ENCODE measurements at regions of chr3 and their contacts with region 1.

Region 1: GRCh38 chr3:26799679-26800317 is 177.2 kb downstream of the LRRC3B start:
- DNase-seq: no peak
- ATAC-seq: no peak
- H3K4me3 ChIP-seq: no peak overlapping the region
- H3K27ac ChIP-seq: no peak overlapping the region
- H3K4me1 ChIP-seq: no peaks in the 10 kb centered on the region
- H3K27me3 ChIP-seq: no peaks in the 10 kb centered on the region
- CTCF ChIP-seq: no peak

Region 2: DNA sequence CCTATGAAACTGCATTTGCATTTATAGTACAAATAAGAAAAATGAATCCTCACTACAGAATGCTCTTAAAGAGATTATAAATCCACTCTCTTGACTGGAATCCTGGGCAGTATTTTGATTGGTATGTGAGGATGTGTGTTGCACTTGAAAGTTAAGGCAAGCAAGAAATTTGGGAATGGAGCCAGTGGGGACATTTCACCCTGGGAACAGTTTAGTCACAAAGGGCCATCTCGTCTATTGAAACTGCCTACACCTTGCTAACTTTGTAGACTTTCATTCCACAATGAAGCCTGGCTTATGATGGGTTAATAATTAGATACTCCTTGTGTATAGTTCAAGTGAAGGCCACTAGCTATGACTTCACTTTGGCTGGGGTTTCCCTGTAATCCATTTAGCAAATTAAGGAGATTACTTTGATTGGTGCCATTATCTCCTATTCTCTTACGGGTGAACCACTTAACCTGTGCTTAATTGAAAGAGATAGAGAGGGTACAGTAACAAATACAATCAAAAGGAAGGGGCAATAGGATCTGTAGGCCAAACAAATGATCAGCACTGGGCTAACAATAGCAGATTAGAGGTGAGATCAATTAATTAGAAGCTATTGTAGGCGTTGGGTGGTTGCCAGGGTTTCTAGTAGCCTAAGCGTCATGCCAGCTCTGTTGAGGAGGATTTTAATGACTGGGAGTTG is 1518.6 kb before region 1 on chr3:
- intact Hi-C with region 1: loop called in 1 of 2 experiments (anchors 10 kb)
- DNase-seq: no peak
- ATAC-seq: no peak
- H3K4me3 ChIP-seq: no peak overlapping the region
- H3K27ac ChIP-seq: no peak overlapping the region
- H3K4me1 ChIP-seq: no peaks in the 10 kb centered on the region
- H3K27me3 ChIP-seq: no peaks in the 10 kb centered on the region
- CTCF ChIP-seq: no peak